ENCODE measurements at regions of chr17 and their contacts with region 1.

Region 1: DNA sequence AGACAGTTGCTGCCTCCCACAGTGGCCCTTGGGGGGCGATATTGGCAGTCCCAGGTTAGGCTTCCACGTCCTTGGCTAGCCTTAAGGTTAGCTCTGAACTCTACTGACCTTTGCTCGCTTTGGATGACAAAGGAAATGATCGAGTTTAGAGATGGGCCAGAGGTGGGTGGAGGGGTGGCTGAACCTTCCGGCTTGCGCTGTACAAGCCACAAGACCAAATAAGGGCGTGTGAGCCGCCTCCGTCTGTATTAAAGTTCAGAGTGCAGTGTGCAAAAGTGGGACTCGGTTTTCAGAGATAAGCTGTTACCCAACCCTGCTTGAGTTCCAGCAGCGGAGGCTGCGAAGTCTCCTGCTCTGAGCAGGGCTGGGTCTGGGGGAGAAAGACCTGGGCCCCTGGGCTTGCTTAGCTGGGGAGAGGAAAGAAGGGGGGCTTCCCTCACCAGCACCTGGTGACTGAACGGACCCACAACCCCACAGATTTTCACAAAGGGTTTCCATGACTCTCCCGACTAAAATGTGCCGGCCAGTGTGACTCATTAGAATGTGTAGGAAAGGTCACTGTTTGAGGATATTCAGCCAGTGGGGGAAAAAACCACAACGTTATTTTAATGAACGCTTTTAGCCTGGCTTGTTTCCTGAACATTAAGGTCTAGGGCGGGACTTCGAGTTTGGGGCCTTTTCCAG is 67.2 kb downstream of the CENPV start:
- DNase-seq: peak; percentile 99
- ATAC-seq: peak; percentile 83
- H3K4me3 ChIP-seq: peak overlapping the region; percentile 64
- H3K27ac ChIP-seq: peak overlapping the region; percentile 96
- H3K4me1 ChIP-seq: peaks cover 71% of the 10 kb centered on the region
- H3K27me3 ChIP-seq: no peaks in the 10 kb centered on the region
- CTCF ChIP-seq: peak; percentile 85

Region 2: DNA sequence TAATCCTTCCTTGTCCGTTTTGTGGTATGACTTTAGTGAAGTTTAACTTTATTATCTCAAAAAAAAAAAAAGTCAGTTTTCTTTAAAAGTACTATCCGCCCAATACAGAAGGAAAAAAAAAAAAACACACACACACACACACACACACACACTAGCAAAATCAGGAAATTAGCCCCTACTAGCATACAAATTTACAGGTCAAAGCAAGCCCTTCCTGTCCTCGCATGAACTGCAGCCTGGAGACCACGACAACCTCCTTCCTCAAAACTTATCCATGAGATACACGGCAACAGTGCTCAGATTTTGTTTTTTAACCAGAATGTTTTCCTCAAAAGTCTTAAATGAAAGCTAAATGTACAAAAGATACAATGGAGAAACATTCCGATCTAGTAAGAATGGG is 87.0 kb before region 1 on chr17:
- CTCF ChIA-PET with region 1: no interaction called
- POLR2A ChIA-PET with region 1: no interaction called
- intact Hi-C with region 1: no loop called
- DNase-seq: no peak
- ATAC-seq: no peak
- H3K4me3 ChIP-seq: no peak overlapping the region
- H3K27ac ChIP-seq: no peak overlapping the region
- H3K4me1 ChIP-seq: peaks cover 9% of the 10 kb centered on the region; the same call in 1 of the 2 replicates
- H3K27me3 ChIP-seq: no peaks in the 10 kb centered on the region
- CTCF ChIP-seq: no peak

Region 3: DNA sequence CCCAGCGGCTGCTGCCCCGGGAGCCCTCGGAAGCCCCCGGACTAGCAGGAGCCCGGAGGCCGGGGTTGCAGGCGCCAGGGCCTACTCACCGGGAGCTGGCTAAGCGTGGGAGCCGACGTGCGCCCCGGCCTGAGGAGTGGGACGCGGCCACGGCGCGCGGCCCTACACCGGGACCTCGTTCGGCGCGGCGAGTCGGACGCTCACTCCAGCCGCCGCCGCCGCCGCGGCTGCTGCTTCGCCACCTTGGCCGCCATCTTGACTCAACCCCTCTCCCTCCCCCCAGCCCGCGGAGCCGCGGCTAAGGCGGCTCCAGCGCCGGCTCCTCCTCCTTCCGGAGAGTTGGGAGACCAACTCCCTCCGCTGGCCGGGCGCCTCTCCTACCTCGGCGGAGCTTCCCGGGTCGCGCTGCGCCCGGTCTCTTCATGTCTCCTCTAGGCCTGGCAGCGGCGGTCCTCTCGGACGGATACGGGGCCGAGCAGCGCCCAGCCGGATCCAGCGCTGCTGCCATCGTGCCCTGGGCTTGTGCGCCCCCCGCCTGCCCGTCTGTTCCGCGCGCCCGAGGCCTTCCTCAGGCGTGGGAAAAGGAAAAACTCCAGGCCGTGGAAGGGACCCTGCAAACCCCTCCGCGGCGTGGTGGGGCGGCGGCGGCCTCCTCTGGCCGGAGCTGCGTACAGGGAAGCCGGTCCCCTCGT is 70.7 kb before region 1 on chr17 and contains the start of gene NCOR1:
- CTCF ChIA-PET with region 1: no interaction called
- POLR2A ChIA-PET with region 1: no interaction called
- intact Hi-C with region 1: loop called (anchors 5 kb)
- DNase-seq: peak; percentile 98
- ATAC-seq: peak; percentile 82
- H3K4me3 ChIP-seq: peak within 1 kb of the TSS; percentile 94
- H3K27ac ChIP-seq: peak within 1 kb of the TSS; percentile 86
- H3K4me1 ChIP-seq: peaks cover 32% of the 10 kb centered on the region
- H3K27me3 ChIP-seq: no peaks in the 10 kb centered on the region
- CTCF ChIP-seq: peak; percentile 37; the same call in 1 of the 2 replicates
- total RNA-seq, gene NCOR1: 127 and 204 TPM in 2 replicates

Region 4: GRCh38 chr17:16329519-16330271 is 43.6 kb after region 1 on chr17:
- CTCF ChIA-PET with region 1: no interaction called
- POLR2A ChIA-PET with region 1: no interaction called
- intact Hi-C with region 1: loop called (anchors 1 kb)
- DNase-seq: peak; percentile 87
- ATAC-seq: peak; percentile 97
- H3K4me3 ChIP-seq: peak overlapping the region; percentile 28; the same call in 1 of the 2 replicates
- H3K27ac ChIP-seq: peak overlapping the region; percentile 59
- H3K4me1 ChIP-seq: peaks cover 13% of the 10 kb centered on the region
- H3K27me3 ChIP-seq: no peaks in the 10 kb centered on the region
- CTCF ChIP-seq: no peak

Region 5: DNA sequence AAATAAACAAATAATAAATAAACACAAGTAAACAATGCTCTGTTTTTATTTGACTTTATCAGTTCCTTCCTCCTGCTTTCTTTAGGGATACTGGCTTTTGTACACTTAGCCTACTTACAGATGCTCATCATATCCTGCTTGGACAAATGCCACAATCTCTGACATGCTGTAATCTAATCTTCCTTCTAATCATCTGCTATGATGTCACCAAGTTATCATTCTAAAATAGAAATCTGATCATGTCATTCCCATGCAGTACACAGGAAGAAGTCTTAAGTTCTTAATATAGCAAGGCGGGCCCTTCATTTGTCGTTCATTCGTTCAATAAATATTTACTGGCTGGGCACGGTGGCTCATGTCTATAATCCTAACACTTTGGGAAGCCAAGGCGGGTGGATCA is 85.6 kb after region 1 on chr17:
- CTCF ChIA-PET with region 1: no interaction called
- POLR2A ChIA-PET with region 1: no interaction called
- intact Hi-C with region 1: loop called (anchors 10 kb)
- DNase-seq: peak; percentile 69
- ATAC-seq: no peak
- H3K4me3 ChIP-seq: no peak overlapping the region
- H3K27ac ChIP-seq: no peak overlapping the region
- H3K4me1 ChIP-seq: peaks cover 2% of the 10 kb centered on the region; the same call in 1 of the 2 replicates
- H3K27me3 ChIP-seq: no peaks in the 10 kb centered on the region
- CTCF ChIP-seq: no peak

Region 6: DNA sequence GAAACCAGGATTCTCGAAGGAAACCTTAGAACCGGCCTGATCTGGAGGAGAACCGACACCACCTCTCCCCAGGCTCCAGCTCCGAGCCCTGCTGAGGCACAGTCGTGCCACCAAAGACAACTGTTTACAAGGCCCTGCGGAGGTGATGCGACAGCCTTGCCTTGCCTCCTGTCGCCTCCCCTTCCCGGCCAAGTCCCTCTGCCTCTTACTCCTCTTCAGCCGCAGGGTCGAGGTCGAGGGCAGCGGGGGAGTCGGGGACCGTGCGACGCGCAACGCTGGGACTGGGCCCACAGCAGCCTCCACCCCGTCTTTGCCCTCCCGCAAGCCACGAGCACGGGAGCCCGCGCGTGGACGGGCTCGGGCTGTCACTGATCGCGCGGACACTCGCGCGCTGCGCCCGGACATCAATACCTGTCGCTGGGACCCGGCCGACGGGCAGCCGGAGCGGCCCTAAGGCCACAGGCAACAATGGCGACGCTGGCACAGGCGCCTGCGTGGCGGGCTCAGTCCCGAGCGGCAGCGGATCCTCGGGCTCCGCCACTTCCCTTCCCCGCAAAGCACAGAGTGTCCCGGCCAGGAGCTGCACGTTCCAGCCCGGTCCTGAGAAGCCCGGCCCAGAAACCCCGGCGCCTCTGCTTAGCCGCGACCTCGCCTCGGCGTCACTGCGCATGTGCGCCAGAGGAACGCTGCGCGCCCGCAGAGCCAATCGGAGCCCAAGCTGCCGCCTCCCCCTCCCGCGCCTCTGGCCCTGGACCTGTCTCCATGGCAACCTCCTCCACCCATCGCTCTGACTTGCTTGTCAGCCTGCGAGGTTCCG is 282.6 kb after region 1 on chr17 and contains the start of gene ZNF287:
- CTCF ChIA-PET with region 1: no interaction called
- POLR2A ChIA-PET with region 1: no interaction called
- intact Hi-C with region 1: no loop called
- DNase-seq: peak; percentile 96
- ATAC-seq: peak; percentile 97
- H3K4me3 ChIP-seq: peak within 1 kb of the TSS; percentile 80
- H3K27ac ChIP-seq: no peak within 1 kb of the TSS
- H3K4me1 ChIP-seq: peaks cover 10% of the 10 kb centered on the region
- H3K27me3 ChIP-seq: no peaks in the 10 kb centered on the region
- CTCF ChIP-seq: no peak
- total RNA-seq, gene ZNF287: 14.0 and 20.6 TPM in 2 replicates